GM13977 (cell line): ENCODE measurements at regions of chr4 and their contacts with region 1.

Region 1: DNA sequence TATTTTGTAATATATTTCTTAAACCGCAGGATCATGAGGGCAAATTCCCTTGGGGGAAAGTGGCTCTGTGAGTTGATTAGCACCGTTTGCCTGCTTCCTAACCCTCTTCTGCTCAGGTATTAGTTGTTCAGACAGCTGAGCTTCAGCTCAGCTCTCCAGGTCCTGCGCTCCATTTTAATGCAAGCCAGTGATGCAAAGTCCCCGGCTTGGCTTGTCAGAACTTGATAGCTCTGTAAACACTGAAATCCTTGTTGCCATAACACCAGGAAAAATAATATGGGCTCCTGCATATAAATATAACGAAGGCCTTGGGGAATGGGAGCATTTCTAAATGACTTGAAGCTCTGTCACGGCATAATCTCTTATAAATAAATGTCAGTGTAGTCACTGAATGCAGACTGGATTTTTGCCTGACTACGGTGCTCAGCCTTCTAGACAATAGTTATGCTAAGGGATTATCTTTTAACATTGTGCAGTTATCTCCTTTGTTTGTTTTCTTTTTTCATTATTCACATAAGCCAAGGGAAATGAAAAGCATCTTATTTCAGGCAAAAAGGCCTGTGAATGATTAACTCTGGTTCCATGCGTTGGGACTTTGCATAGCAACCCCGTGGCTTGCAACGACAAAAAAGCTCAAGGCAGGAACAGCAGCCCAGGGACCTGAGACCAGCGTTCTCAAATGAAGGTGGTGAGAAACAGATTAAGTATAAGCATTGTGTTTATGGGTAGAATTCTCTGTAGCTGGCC is 253.2 kb downstream of the SPRY1 start:
- DNase-seq: no peak
- CTCF ChIP-seq: no peak

Region 2: DNA sequence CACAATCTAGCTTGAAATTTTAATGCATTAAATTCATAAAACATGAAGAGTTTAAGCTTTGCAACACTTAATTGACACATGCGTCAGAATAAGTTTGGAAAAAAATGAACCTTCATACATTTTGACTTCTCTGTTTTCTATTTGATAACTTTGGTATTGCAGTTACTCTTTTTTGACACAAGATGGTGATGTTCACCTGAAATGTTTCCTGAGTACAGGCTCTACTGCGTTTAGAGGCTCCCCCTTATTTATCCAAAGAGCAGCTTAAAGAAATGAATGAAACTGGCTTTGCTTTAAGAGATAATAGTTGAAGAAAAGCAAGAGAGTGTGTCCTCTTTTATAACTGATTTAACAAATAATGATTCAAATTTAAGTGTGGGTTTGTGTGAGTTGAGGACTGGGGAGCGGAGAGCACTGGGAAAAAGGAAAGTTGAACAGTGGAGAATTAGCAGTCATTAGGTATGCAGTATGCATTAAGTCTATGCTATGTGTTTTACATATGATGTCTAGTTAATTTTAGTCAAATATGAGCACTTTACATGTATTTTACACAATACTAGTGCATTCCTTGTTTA is 546.8 kb before region 1 on chr4:
- in situ Hi-C with region 1: loop called (anchors 25 kb)
- DNase-seq: peak; percentile 59
- CTCF ChIP-seq: peak; percentile 66

Region 3: DNA sequence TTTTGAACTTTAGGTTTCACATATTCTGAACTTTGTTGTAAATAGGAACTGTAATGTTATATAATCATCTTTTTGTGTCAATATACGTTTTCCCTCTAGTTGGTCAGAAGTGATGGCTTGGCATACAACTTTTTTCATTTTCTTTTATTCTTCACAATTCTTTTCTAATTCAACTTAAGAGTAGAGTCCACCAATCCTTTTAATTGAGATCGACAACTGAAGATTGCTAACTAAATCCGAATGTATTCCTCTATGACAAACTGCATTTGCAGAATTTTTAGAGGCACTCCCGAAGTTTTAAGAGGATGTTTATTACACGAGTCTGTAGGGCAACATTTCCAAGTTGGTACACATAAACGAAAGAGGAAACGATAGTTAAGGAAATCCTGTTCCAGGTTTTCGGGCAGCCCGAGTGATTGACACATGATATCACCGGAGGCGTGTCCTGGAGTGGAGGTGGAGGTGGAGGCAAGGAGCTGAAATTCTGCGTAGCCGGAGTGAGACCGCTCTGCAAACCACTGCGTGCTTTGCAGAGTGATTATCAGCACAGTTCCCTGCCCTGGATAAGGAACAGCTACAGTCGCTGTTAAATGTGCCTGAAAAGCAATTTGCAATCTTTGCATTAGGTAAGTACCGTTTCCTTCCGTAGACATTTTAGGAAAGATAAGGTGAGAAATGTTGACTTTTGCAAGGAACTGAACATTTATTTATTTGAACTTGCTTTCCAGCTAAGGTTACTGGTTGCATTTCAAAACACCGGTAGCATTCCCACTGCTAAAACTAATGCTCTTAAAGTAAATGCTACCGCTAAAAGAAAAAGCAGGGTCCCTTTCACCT is 253.3 kb before region 1 on chr4 and contains the start of gene SPRY1:
- in situ Hi-C with region 1: loop called (anchors 25 kb)
- DNase-seq: peak; percentile 62
- CTCF ChIP-seq: no peak